Activated CD8-positive, alpha-beta T cell treated with anti-CD3 and anti-CD28 coated beads for 36 hours (primary cell): ENCODE measurements at regions of chr1 and their contacts with region 1.

Region 1: GRCh38 chr1:23772049-23772853 is 6.0 kb upstream of the PITHD1 start:
- DNase-seq: peak; percentile 95
- ATAC-seq: peak; percentile 99
- H3K4me3 Mint-ChIP-seq: no peak overlapping the region
- H3K27ac Mint-ChIP-seq: no peak overlapping the region
- H3K4me1 Mint-ChIP-seq: peaks cover 32% of the 10 kb centered on the region
- H3K27me3 Mint-ChIP-seq: no peaks in the 10 kb centered on the region
- CTCF ChIP-seq: peak; percentile 90

Region 2: DNA sequence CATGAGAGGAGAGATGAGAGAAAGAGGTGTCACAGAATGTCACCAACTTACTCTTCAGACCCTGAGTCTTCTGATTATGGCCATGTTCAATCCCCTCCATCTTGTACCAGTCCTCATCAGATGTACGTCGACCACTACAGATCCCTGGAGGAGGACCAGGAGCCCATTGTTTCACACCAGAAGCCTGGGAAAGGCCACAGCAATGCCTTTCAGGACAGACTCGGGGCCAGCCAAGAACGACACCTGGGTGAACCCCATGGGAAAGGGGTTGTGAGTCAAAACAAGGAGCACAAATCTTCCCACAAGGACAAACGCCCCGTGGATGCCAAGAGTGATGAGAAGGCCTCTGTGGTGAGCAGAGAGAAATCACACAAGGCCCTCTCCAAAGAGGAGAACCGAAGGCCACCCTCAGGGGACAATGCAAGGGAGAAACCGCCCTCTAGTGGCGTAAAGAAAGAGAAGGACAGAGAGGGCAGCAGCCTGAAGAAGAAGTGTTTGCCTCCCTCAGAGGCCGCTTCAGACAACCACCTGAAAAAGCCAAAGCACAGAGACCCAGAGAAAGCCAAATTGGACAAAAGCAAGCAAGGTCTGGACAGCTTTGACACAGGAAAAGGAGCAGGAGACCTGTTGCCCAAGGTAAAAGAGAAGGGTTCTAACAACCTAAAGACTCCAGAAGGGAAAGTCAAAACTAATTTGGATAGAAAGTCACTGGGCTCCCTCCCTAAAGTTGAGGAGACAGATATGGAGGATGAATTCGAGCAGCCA is 21.0 kb before region 1 on chr1:
- CTCF ChIA-PET with region 1: interaction called, 15 read pairs
- POLR2A ChIA-PET with region 1: no interaction called
- intact Hi-C with region 1: no loop called
- DNase-seq: peak; percentile 58
- ATAC-seq: peak; percentile 79
- H3K4me3 Mint-ChIP-seq: no peak overlapping the region
- H3K27ac Mint-ChIP-seq: peak overlapping the region; percentile 40
- H3K4me1 Mint-ChIP-seq: peaks cover 33% of the 10 kb centered on the region
- H3K27me3 Mint-ChIP-seq: no peaks in the 10 kb centered on the region
- CTCF ChIP-seq: peak; percentile 65

Region 3: GRCh38 chr1:23800400-23801337 is 28.4 kb after region 1 on chr1 and contains the start of gene GALE:
- CTCF ChIA-PET with region 1: interaction called, 18 read pairs
- POLR2A ChIA-PET with region 1: interaction called, 168 read pairs
- intact Hi-C with region 1: no loop called
- DNase-seq: peak; percentile 98
- ATAC-seq: peak; percentile 89
- H3K4me3 Mint-ChIP-seq: peak within 1 kb of the TSS; percentile 92
- H3K27ac Mint-ChIP-seq: peak within 1 kb of the TSS; percentile 90
- H3K4me1 Mint-ChIP-seq: peaks cover 13% of the 10 kb centered on the region
- H3K27me3 Mint-ChIP-seq: no peaks in the 10 kb centered on the region
- CTCF ChIP-seq: no peak
- total RNA-seq, gene GALE: 40.7 to 43.6 TPM

Region 4: DNA sequence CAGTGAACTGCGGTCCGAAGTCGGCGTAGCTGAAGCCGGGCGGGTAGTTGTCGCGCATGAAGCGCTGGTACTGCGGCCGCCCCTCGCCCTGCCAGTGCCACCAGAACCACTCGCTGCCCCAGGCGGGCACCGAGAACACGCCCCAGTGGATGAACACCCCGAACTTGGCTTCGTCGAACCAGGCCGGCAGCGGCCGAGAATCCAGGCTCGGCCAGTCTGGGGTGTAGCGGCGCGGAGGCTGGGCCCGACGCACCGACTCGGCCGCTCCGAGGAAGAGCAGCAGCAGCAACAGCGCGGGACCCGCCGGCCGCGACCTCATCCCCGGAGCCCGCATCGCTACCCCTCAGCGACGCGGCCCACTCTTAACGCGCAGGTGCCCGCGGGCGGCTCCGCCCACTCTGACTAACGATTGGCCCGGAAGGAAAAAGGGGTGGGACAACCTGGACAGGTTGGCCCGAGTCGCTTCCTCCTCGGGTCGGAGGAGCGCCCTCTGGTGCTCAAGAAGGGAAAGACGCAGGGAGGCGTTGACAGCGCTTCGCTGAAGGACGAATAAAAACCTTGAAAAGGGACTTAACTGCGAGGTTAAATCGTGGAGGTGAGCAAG is 95.8 kb after region 1 on chr1 and contains the start of gene FUCA1:
- CTCF ChIA-PET with region 1: interaction called, 15 read pairs
- POLR2A ChIA-PET with region 1: no interaction called
- intact Hi-C with region 1: no loop called
- DNase-seq: peak; percentile 96
- ATAC-seq: peak; percentile 98
- H3K4me3 Mint-ChIP-seq: peak within 1 kb of the TSS; percentile 76
- H3K27ac Mint-ChIP-seq: peak within 1 kb of the TSS; percentile 53
- H3K4me1 Mint-ChIP-seq: peaks cover 18% of the 10 kb centered on the region
- H3K27me3 Mint-ChIP-seq: no peaks in the 10 kb centered on the region
- CTCF ChIP-seq: peak; percentile 87
- total RNA-seq, gene FUCA1: 4.6 to 4.8 TPM

Region 5: DNA sequence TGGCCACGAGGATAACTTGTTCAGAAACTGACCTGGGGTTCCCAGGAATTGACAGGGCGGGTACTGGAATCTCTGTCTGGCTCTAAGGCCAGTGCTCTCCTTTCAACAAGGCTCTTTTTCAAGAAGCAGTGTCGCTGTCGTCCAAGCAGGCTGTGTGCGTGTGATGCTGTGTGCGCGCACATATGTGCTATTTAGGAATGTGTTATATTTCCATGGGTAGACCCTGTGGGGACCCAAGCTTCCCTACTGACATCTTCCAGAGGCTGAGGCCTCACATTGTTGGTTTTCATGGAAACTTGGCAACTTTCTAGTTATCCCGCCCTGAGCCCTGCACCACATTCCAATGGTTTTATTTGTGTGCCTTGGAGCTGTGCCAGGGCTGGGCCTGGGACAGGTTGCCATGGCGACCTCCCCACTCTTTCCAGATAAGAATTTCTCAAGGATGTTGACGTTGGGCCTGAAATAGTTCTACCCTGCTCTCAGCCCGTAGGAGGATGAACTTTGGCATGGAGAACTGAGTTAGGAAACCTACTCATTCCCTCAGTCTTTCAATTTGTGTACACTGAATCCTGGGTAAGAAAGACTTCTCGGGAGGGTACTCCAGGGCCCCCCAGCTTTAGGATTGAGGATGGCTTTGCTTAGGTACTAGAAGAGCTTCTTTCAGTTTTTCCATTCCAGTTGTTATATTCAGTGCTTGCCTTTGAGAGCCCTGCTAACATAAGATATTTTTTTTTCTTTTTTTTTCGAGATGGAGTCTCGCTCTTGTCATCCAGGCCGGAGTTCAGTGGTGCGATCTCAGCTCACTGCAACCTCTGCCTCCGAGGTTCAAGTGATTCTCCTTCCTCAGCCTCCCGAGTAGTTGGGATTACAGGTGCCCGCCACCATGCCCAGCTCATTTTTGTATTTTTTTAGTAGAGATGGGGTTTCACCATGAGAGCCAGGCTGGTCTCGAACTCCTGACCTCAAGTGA is 246.6 kb after region 1 on chr1:
- CTCF ChIA-PET with region 1: no interaction called
- POLR2A ChIA-PET with region 1: no interaction called
- intact Hi-C with region 1: no loop called
- DNase-seq: no peak
- ATAC-seq: no peak
- H3K4me3 Mint-ChIP-seq: no peak overlapping the region
- H3K27ac Mint-ChIP-seq: no peak overlapping the region
- H3K4me1 Mint-ChIP-seq: no peaks in the 10 kb centered on the region
- H3K27me3 Mint-ChIP-seq: no peaks in the 10 kb centered on the region
- CTCF ChIP-seq: no peak